ENCODE measurements at regions of chr15 and their contacts with region 1.

Region 1: DNA sequence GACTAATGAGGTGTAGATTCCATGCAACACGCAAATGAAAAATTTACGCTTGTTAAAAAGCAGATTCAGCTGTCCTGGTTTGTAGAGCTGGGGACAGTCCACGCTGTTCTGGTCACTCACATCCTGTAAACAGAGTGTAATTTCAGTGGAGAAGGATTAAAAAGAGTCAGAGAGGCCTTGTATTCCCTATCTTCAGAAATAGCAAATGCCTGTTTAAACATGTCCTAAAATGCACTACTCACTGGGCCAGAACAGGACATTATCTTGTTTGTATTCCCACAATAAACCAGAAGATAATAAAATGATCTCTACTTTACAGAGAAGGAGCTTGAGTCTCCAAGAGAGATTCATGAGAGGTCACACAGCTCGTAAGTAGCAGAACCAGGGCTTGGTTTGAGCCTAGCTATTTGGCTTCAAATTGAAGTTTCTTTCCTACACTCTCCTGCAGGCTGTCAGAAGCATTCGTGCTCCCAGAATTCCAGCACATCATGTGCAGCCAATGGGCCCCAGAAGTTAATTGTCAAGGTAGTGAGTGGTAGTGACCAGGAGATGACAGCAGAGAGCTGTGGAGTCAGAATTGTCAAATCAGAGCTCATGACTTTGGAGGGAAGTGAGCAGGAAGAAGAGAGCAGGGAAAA is 242.5 kb downstream of the ATP8B4 start:
- DNase-seq: no peak
- ATAC-seq: peak; percentile 89

Region 2: DNA sequence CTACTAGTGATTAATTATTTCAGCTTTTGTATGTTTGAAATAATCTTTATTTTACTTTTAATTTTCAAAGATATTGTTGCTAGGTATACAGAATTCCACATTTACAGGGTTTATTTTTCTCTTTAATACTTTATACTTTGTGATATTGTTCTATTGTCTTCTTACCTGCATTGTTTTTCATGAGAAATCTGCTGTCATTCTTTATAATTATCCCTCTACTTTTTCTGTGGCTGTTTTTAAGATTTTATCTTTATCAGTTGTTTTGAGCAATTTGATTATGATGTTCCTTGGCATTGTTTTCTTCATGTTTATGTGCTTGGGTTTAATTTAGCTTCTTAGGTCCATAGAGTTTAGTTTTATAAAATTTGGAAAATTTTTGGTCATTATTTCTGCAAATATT is 87.1 kb before region 1 on chr15:
- intact Hi-C with region 1: no loop called
- DNase-seq: no peak
- ATAC-seq: no peak

Region 3: GRCh38 chr15:49989498-49989897 is 113.0 kb after region 1 on chr15:
- intact Hi-C with region 1: loop called (anchors 5 kb)
- DNase-seq: no peak
- ATAC-seq: peak; percentile 78

Region 4: DNA sequence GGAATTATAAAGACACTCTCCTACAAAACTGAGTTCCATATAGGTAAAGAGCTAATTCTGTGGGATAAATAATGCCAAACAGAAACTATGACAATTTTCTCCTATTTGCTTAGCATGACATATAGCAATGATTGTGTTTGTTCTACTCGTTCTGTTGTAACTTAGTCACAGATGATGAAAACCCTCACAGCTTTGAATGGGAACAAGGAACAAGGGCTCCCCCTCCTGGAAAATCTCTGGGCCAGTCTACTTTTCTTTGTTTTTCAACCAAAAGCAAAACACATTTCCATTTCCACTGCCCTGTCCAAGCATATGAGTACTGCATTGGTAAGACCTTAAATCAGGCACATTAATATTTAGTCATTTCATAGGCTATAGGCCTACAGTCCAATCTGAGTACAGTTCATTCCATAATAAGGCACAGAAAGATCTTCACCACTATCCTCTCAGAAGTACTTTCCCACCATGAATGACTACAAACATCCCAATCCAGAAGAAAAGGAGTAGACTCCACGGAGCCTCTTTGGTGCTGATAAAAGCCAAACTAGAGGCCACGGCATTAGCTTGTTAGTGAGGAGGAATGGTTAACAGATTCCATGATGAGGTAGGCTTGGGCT is 175.4 kb after region 1 on chr15:
- intact Hi-C with region 1: loop called (anchors 2 kb)
- DNase-seq: no peak
- ATAC-seq: no peak